HEK293T (cell line): ENCODE measurements at regions of chrX and their contacts with region 1.

Region 1: DNA sequence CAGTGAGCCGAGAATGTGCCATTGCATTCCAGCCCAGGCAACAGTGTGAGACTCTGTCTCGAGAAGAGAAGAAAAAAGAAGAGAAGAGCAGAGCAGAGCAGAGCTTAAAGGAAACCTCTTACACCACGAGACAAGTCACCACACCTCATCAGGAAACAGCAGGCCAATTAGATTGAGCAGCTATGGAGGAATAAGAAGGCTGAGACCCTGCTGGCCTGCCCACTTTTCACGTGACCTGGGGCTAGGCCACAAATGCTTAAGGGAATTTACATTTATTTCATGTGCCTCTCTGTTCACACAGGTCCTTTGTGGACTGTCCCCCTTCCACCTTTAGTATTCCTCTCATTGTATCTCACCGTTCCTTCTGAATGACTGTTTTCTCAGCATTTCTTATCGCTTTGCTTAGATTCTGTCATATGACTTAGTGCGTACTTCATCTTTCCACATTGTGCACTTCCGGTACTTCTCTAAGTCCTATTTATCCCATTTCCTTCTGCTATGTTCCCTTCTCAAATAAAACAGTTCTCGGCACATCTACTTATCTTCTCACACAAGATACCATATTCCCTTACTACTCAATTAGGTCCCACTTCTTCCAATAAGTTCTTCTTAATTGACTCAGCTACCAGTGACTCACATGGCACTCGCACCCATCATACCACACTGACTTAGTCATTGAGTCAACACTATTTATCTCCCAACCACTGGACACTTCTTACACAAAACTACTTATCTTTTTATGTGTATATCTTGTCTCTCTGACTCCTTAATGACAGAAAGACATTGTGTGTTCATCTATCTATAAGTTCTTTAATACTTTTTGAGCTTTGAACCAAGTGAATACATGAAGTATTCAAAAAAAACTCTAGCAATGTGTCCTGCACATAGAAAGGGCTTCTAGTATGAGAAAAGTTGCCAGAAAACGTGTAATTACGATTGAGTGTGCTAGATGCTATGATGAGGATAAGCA is 11.0 kb downstream of the CUL4B start:
- DNase-seq: no peak

Region 2: GRCh38 chrX:119960625-119961024 is 589.1 kb before region 1 on chrX:
- CTCF ChIA-PET with region 1: no interaction called
- POLR2A ChIA-PET with region 1: no interaction called
- DNase-seq: no peak

Region 3: DNA sequence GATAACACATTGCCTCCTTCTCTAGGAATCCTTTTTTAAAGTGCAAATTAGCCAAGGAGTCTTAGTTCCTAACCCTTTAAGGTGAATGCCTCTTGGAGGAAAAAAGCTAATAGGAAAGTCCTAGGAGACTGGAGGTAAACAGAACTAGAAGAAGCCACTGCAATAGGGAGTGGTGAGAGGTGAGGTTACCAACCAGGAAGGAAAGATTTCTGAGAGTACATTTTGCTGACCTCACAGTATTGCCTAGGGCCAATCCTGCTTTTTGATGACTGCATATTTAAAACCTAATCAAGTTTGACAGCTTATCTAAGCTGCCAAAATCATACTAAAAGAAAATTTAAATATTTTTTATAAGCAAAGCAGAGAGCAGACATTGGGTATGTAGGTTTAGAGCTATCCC is 18.3 kb after region 1 on chrX:
- CTCF ChIA-PET with region 1: no interaction called
- POLR2A ChIA-PET with region 1: no interaction called
- DNase-seq: no peak

Region 4: GRCh38 chrX:121479406-121479805 is 929.6 kb after region 1 on chrX:
- CTCF ChIA-PET with region 1: no interaction called
- POLR2A ChIA-PET with region 1: no interaction called
- DNase-seq: no peak

Region 5: DNA sequence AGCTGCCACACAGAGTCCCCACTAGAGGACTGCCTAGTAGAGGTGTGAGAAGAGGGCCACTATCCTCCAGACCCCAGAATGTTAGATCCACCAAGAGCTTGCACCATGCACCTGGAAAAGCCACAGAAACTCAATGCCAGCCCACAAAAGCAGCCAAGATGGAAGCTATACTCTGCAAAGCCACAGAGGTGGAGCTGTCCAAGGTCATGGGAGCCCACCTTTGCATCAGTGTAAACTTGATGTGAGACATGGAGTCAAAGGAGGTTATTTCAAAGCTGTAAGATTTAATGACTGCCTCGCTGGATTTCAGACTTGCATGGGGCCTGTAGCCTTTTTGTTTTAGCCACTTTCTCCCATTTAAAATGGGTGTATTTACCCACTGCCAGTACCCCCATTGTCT is 1604.3 kb after region 1 on chrX:
- CTCF ChIA-PET with region 1: interaction called, 10 read pairs
- POLR2A ChIA-PET with region 1: no interaction called
- DNase-seq: no peak